Heart left ventricle (tissue), 16 donors: ENCODE measurements at regions of chr6 and their contacts with region 1.

Region 1: GRCh38 chr6:75130784-75131183 is 75.1 kb downstream of the COL12A1 start:
- DNase-seq: no peak
- ATAC-seq: no peak
- H3K4me3 ChIP-seq: no peak overlapping the region
- H3K27ac ChIP-seq: no peak overlapping the region
- H3K4me1 ChIP-seq: no peaks in the 10 kb centered on the region
- H3K27me3 ChIP-seq: no peaks in the 10 kb centered on the region
- CTCF ChIP-seq: no peak
- POLR2A ChIP-seq: no peak

Region 2: DNA sequence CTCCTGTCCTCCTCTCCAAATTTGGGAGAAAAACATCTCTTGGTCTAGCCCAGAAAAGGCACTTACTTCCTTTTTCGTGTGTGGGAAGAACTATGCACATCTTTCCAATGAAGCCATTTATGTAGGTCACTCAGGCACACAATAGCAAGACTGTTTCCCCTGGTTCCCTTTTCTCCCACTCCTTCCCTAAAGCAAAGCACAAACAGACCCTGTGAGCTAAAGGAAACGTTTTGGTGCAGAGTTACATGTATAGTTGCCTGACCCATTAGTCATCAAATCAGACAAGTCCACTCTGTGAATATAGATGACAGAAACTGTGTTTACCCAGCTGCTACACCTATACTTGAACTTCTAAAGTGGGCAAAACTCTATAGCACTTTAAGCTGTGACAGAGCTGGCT is 399.6 kb before region 1 on chr6:
- intact Hi-C with region 1: no loop called
- DNase-seq: no peak
- ATAC-seq: peak in 2 of 4 donors; percentile 20 to 69
- H3K4me3 ChIP-seq: no peak overlapping the region
- H3K27ac ChIP-seq: peak overlapping the region in 3 of 12 donors; percentile 31 to 39 (median 36)
- H3K4me1 ChIP-seq: peaks cover 0 to 6% (median 0%) of the 10 kb centered on the region in 12 donors
- H3K27me3 ChIP-seq: no peaks in the 10 kb centered on the region
- CTCF ChIP-seq: no peak
- POLR2A ChIP-seq: no peak

Region 3: DNA sequence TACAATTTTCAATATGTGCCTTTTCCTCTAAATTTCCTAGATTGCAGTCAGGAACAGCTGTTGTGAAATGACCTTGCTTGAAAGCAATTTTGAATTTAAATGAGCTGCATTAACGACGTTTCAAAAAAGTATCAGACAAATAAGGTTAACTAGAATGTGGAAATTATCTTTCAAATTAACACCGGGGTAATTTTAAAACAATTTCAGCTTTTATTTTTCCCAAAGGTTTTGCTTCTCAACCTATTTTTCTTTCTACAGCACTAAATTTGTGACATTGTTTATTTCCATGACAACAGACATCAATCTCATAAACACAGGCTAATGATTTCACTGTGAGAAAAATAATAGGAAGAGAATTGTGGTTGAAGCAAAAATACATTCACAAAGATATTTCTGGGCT is 36.5 kb after region 1 on chr6:
- intact Hi-C with region 1: loop called in 1 of 10 experiments (anchors 2 kb)
- DNase-seq: no peak
- ATAC-seq: no peak
- H3K4me3 ChIP-seq: no peak overlapping the region
- H3K27ac ChIP-seq: no peak overlapping the region
- H3K4me1 ChIP-seq: peaks cover 0 to 38% (median 10%) of the 10 kb centered on the region in 12 donors
- H3K27me3 ChIP-seq: no peaks in the 10 kb centered on the region
- CTCF ChIP-seq: no peak
- POLR2A ChIP-seq: no peak

Region 4: DNA sequence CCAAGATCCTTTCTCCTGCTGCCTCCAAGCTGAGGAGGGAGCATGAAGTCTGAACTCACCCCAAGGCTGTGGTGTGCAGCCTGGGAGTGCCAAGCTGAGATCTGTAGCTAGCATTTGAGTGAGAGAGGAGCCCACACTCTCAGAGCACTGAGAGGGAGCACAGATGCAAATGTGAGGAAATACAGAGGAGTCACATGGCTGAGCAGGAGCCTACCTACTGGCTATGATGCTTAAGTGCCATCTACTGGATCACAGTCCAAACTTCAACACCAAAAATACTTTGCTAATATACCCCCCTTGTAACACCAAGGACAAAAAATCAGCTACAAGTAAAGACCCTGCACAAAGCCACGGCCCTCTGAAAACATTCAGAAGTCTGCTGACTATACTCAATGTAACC is 1036.1 kb after region 1 on chr6:
- intact Hi-C with region 1: no loop called
- DNase-seq: no peak
- ATAC-seq: no peak
- H3K4me3 ChIP-seq: no peak overlapping the region
- H3K27ac ChIP-seq: no peak overlapping the region
- H3K4me1 ChIP-seq: no peaks in the 10 kb centered on the region
- H3K27me3 ChIP-seq: no peaks in the 10 kb centered on the region
- CTCF ChIP-seq: no peak
- POLR2A ChIP-seq: no peak